Prostate gland (tissue), 2 donors: ENCODE measurements at regions of chrX and their contacts with region 1.

Region 1: GRCh38 chrX:43703211-43703791 is 47.2 kb downstream of the MAOA start:
- DNase-seq: no peak
- H3K4me3 ChIP-seq: no peak overlapping the region
- H3K27ac ChIP-seq: peak overlapping the region; percentile 35 to 42
- H3K4me1 ChIP-seq: no peaks in the 10 kb centered on the region
- H3K27me3 ChIP-seq: no peaks in the 10 kb centered on the region
- CTCF ChIP-seq: no peak
- POLR2A ChIP-seq: no peak

Region 2: DNA sequence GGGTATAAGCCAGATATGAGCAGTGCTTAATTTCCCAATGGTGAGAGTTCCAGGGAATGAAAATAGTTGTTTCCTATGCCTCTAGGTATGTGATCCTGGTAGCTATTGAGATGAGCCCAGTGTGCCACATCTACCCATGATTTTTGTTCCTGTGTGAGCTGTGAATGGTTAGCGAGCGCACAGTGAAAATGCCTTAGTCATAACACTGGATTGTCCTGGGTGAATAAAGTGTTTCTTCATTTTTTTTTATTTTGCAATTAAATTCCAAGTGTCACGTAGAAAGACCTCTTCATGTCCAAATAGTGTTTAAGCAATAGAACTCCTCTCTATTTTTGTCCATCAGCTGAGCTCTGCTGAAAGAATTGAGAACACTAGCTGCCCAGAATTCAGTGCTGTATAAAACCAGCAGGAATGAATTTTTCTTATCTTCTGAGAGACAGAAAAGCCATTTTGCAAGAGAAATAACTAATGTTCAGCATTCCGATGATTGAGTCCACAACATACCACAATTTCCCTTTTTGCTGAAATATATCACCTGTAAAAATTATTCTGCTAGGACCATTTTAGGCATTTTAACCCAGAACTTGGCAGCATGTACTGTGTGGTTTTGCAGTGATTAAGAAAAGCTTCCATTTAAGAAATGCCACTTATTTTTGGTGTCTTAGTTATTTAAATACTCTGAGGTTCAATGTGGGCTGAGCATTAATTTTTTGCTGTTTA is 41.6 kb before region 1 on chrX:
- intact Hi-C with region 1: loop called (anchors 5 kb)
- DNase-seq: no peak
- H3K4me3 ChIP-seq: no peak overlapping the region
- H3K27ac ChIP-seq: no peak overlapping the region
- H3K4me1 ChIP-seq: no peaks in the 10 kb centered on the region
- H3K27me3 ChIP-seq: no peaks in the 10 kb centered on the region
- CTCF ChIP-seq: no peak
- POLR2A ChIP-seq: no peak

Region 3: DNA sequence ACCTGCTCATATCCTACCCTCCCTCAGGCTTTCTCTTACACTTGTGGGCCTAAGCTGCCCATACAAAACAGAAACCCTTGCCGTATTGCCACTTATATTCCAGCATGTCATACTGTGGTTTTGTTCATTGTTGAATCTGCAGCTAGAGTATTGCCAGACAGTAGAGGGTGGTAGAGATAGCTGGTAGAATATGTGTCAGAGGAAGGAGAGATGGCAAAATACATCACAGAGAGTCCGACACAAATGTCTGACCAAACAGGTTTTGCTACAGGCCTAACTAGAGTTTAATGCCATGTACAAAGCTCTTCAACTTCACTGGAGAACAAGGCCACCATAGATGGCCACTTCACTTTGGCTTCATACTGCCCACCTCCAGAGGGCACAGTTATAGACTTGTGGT is 480.0 kb after region 1 on chrX:
- intact Hi-C with region 1: no loop called
- DNase-seq: no peak
- H3K4me3 ChIP-seq: no peak overlapping the region
- H3K27ac ChIP-seq: no peak overlapping the region
- H3K4me1 ChIP-seq: no peaks in the 10 kb centered on the region
- H3K27me3 ChIP-seq: no peaks in the 10 kb centered on the region
- CTCF ChIP-seq: peak in 1 of 4 experiments; percentile 5
- POLR2A ChIP-seq: no peak